Right ventricle myocardium superior (tissue), 1 donor: ENCODE measurements at regions of chr11 and their contacts with region 1.

Region 1: DNA sequence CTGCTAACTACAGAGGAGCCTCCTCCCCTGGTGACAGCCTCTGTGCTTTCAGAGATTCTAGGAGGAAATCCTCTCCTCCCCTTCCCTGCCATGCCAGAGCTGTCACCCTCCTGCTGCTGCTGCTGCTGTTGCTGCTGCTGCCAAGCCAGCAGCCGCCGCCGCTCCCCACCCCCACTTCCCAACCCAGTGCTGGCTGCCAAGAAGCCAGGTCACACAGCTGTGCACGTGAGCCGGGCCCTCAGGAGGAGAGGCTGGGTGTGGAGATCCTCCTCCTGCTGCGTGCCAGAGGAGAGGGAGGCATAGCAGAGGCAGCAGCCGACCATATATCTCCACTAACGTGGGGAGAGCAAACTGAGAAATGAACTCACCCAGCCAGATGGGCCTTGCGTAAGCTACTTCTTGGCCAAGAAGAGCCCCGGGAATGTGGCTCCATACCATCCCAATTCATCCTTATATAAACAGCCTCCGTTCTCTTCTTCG is 12.4 kb downstream of the CRY2 start:
- DNase-seq: peak; percentile 95
- ATAC-seq: peak; percentile 77

Region 2: DNA sequence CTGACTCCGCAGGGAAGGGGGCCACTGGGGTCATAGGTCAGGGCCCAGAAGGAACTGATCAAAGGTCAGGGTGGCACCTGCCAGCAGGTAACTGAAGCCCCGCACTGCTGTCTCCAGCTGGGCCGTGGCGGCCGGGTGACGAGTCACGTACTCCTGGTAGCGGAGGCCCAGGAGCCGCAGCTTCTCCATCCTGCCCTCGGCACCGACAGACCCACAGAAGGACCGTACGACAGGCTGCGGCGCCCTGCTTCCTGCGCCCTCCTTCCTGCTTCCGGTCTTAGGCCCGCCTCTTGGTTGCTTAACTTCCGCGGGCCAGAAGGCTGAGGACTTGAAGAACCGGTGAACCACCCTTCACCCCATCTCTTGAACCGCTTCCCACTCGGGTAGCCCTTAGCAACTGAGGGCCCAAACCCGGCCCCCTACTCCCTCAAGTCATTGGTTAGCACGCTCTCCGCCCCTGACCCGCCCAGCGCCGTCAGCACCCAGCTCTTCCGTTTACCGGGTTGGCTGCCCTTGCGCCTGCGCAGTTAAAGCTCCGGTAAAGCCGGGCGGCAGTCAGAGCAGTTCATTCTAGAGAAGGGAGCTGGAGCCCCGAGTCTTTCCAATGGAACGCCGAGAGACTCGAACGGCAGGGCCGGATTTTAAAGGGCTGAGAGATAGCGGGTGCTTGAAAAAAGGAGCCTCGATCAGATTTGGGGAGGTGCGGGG is 58.1 kb after region 1 on chr11 and contains the start of gene PEX16:
- intact Hi-C with region 1: loop called (anchors 5 kb)
- DNase-seq: peak; percentile 98
- ATAC-seq: peak; percentile 96
- total RNA-seq, gene PEX16: 8.5 TPM

Region 3: DNA sequence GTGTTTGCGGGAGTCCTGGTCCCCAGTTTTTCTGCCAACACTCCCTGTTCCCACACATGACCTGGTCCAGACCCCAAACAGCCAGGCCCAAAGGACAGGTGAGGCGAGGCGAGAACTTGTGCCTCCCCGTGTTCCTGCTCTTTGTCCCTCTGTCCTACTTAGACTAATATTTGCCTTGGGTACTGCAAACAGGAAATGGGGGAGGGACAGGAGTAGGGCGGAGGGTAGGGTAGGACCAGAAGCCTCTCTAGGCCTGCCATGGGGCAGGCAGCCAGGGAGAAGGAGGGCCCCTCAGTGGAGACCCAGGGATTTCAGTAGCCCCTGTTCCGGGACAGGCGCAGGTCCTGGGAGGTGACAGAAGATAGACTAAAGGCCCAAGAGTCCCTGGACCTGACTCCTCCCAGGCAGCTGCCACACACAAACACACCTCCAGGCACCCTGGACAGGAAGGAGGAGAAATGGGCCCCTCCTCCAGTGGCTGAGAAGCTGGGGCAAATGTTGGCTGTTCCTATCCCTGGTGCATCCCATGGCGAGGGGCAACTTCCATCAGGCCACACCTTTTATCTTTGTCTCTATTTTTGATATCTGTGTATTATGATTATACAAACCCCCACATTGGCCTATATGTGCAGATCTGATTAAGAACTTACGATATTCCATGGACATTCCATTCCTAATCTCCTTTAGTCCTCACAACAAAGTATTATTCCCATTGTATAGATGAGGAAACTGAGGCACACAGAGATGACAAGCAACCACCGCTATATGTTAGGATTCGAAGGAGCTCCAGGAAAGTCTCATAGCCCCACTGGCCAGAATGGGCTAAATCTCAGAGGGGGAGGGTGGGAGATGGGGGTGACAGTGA is 858.7 kb after region 1 on chr11:
- intact Hi-C with region 1: no loop called
- DNase-seq: no peak
- ATAC-seq: peak; percentile 42